ENCODE measurements at regions of chr5 and their contacts with region 1.

Region 1: GRCh38 chr5:170267431-170268152 is 30.0 kb downstream of the LCP2 start:
- DNase-seq: peak in 1 of 2 donors; percentile 87
- H3K4me3 ChIP-seq: peak overlapping the region; percentile 39 to 55
- H3K27ac ChIP-seq: peak overlapping the region; percentile 7 to 34
- H3K4me1 ChIP-seq: peaks cover 0 to 6% of the 10 kb centered on the region in 2 donors
- H3K27me3 ChIP-seq: no peaks in the 10 kb centered on the region
- CTCF ChIP-seq: peak; percentile 74 to 87 (median 76)

Region 2: DNA sequence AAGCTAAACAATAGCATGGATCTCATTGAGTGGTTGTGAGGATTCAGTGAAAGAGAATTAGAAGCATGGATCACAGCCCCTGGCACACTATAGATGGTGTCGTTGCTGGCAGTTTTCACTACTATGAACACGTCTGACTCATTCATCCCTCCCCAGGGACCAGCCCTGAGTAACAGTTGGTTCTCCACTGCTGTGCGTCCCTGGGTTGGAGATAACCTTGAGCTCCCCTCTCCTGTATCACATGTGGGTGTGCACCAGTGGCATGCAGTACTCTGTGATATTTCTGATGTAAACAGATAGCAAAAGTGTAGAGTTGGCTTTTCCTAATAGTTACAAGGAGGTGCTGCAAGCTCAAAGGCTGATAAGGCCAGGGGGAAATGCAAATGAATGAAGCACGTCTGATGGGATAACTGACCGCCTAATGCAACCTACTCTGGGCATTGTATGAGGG is 38.8 kb after region 1 on chr5:
- intact Hi-C with region 1: loop called (anchors 5 kb)
- DNase-seq: peak; percentile 65 to 93
- H3K4me3 ChIP-seq: no peak overlapping the region
- H3K27ac ChIP-seq: peak overlapping the region; percentile 52 to 68
- H3K4me1 ChIP-seq: peaks cover 7 to 23% of the 10 kb centered on the region in 2 donors
- H3K27me3 ChIP-seq: no peaks in the 10 kb centered on the region
- CTCF ChIP-seq: no peak

Region 3: DNA sequence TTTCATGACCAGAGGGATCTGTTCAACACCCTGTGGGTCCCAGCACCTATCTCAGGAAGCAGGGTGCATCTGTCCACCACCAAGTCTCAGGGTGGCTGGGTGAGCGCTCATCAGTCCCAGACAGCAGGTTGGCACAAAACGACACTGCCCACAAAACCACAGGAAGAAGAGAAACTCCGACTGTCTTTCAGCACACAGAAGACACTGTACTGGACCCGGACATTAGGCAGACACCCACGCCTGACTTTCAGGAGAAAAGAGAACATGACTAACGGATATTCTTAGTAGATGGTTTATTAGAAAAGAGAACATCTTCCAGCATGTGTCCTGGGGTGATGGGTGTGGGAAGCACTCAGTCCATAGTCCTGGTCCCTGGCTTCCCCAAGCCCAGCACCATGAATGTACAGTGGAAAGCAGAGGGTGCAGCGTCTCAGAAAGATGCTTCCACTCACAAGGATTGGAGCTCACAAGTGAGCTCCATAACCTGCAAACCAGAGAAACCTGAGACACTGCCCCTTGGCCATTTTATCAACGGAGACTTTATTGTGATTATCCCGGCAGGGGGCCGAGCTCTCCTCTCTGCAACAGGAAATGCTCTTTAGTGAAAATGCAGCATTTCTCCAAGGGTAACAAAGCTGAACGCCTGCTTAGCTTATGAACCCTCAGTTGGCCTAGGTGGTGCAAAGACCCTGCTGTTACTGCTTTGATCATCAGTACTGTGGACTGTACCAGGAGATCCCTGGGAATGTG is 65.7 kb after region 1 on chr5:
- intact Hi-C with region 1: loop called (anchors 5 kb)
- DNase-seq: peak in 1 of 2 donors; percentile 37
- H3K4me3 ChIP-seq: no peak overlapping the region
- H3K27ac ChIP-seq: no peak overlapping the region
- H3K4me1 ChIP-seq: peaks cover 0 to 14% of the 10 kb centered on the region in 2 donors
- H3K27me3 ChIP-seq: no peaks in the 10 kb centered on the region
- CTCF ChIP-seq: no peak

Region 4: GRCh38 chr5:170348137-170348633 is 80.6 kb after region 1 on chr5:
- intact Hi-C with region 1: loop called (anchors 5 kb)
- DNase-seq: no peak
- H3K4me3 ChIP-seq: no peak overlapping the region
- H3K27ac ChIP-seq: no peak overlapping the region
- H3K4me1 ChIP-seq: no peaks in the 10 kb centered on the region
- H3K27me3 ChIP-seq: no peaks in the 10 kb centered on the region
- CTCF ChIP-seq: peak in 1 of 3 experiments; percentile 33

Region 5: DNA sequence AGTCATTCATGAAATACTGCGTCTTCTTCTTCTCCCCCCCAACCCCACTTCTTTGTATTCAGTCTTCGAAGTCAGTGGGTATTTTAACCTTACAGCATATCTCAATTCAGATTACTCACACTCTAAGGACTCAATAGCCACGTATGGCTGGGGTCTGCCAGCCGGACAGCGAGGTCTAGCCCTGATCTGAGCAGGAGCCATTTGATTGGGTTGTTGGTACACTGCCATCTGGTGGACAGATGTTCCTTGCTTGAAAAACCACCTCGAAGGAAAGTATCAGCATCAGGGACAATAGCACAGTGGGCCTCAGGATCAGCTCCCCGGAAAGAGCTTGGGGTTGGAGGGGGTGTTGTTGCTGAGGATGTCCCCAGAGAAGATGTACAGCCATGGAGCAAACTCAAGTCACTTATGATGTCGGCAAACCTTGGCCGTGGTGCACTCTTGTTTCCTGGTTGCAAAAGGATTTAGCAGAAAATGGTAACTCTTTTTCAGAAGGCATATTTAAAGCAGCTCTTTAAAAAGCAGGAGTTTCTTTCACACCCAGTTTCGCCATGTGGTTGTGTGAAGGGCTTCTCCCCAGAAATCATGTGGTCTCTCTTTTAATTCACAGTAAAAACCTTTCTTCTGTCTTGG is 153.3 kb after region 1 on chr5:
- intact Hi-C with region 1: loop called (anchors 1 kb)
- DNase-seq: peak in 1 of 2 donors; percentile 82
- H3K4me3 ChIP-seq: no peak overlapping the region
- H3K27ac ChIP-seq: no peak overlapping the region
- H3K4me1 ChIP-seq: no peaks in the 10 kb centered on the region
- H3K27me3 ChIP-seq: no peaks in the 10 kb centered on the region
- CTCF ChIP-seq: peak; percentile 54 to 84 (median 76)

Region 6: GRCh38 chr5:170638454-170639220 is 371.0 kb after region 1 on chr5:
- intact Hi-C with region 1: loop called (anchors 10 kb)
- DNase-seq: peak in 1 of 2 donors; percentile 82
- H3K4me3 ChIP-seq: no peak overlapping the region
- H3K27ac ChIP-seq: no peak overlapping the region
- H3K4me1 ChIP-seq: peaks cover 0 to 12% of the 10 kb centered on the region in 2 donors
- H3K27me3 ChIP-seq: no peaks in the 10 kb centered on the region
- CTCF ChIP-seq: peak; percentile 56 to 83 (median 81)